Activated naive CD4-positive, alpha-beta T cell treated with anti-CD3 and anti-CD28 coated beads, Interleukin-2, amount 10 ng/mL, durations not matched to agents 7 days and 5 days (primary cell): ENCODE measurements at regions of chr5 and their contacts with region 1.

Region 1: GRCh38 chr5:151157426-151158286 is at the start of gene ANXA6:
- DNase-seq: peak; percentile 80
- H3K4me3 Mint-ChIP-seq: peak within 1 kb of the TSS; percentile 98
- H3K27ac Mint-ChIP-seq: peak within 1 kb of the TSS; percentile 95
- H3K4me1 Mint-ChIP-seq: peaks cover 51% of the 10 kb centered on the region
- H3K27me3 Mint-ChIP-seq: no peaks in the 10 kb centered on the region

Region 2: DNA sequence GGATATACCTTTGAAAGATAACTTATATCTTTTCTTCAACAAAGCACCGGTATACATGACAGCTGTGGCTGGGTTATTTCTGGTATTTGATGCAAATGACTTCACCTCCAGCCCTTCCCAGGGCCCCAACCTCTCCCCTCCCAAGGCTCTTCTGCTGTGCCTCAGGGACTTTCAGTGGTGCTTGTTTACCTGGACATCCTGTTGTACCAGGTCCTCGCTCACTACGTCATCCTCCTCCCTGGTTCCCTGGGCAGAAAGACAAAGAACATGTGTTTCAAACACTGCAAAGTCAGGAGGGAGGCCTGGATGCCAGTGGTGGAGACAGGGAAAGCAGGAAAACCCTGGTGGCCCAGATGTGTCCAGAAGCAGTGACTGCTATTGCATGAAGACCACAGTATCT is 23.4 kb before region 1 on chr5:
- CTCF ChIA-PET with region 1: interaction called, 366 read pairs
- DNase-seq: no peak
- H3K4me3 Mint-ChIP-seq: no peak overlapping the region
- H3K27ac Mint-ChIP-seq: peak overlapping the region; percentile 7
- H3K4me1 Mint-ChIP-seq: peaks cover 64% of the 10 kb centered on the region
- H3K27me3 Mint-ChIP-seq: no peaks in the 10 kb centered on the region